Activated CD8-positive, alpha-beta T cell treated with anti-CD3 and anti-CD28 coated beads for 36 hours (primary cell): ENCODE measurements at regions of chr7 and their contacts with region 1.

Region 1: DNA sequence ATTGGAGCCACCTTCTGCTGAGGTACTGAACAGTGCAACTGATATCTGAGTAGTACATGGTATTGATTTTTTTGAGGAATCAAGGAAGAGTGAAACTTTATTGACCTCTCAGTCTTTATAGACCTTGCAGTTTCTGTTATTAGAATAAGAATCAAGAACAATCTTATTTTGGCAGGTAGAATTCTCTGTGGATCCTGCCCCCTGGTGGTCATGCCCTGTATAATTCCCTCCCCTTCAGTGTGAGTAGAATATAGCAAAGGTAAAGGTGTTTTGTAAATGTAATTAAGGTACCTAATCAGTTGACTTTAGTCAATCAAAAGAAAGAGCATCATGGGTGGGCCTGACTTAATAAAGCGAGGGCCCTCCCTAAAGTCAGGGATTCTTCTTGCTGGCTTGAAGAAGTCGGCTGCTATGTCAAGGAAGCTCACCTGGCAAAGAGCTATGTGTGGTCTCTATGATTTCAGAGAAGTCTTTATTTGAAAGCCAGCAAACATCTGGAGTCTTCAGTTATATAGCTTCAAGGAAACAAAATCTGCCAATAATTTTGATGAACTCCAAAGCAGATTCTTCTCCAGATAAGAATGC is 142.8 kb downstream of the LSM5 start:
- DNase-seq: peak; percentile 54
- ATAC-seq: no peak
- H3K4me3 Mint-ChIP-seq: no peak overlapping the region
- H3K27ac Mint-ChIP-seq: no peak overlapping the region
- H3K4me1 Mint-ChIP-seq: no peaks in the 10 kb centered on the region
- H3K27me3 Mint-ChIP-seq: no peaks in the 10 kb centered on the region
- CTCF ChIP-seq: peak; percentile 84

Region 2: GRCh38 chr7:32204361-32205018 is 142.8 kb before region 1 on chr7:
- CTCF ChIA-PET with region 1: interaction called, 27 read pairs
- POLR2A ChIA-PET with region 1: no interaction called
- intact Hi-C with region 1: no loop called
- DNase-seq: peak; percentile 21
- ATAC-seq: no peak
- H3K4me3 Mint-ChIP-seq: no peak overlapping the region
- H3K27ac Mint-ChIP-seq: no peak overlapping the region
- H3K4me1 Mint-ChIP-seq: no peaks in the 10 kb centered on the region
- H3K27me3 Mint-ChIP-seq: no peaks in the 10 kb centered on the region
- CTCF ChIP-seq: no peak

Region 3: DNA sequence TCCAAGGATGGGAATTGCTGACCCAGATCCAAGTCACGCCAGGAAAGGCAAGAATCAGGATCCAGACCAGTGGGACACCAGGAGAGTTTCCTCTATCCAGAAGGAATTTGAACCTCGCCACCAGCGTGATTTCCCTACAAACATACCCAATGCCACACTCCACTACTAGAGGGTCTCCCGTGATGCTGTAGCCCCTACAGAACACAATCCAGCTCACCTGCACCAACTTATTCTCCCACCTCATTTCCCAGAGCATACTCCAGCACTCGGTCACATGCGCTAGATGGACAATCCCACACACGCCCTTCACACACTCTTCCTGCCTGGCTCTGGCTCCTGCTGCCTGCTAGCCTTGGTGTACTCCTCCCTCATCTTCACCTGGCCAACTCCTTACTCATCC is 135.0 kb before region 1 on chr7:
- CTCF ChIA-PET with region 1: interaction called, 27 read pairs
- POLR2A ChIA-PET with region 1: no interaction called
- intact Hi-C with region 1: loop called (anchors 5 kb)
- DNase-seq: no peak
- ATAC-seq: no peak
- H3K4me3 Mint-ChIP-seq: no peak overlapping the region
- H3K27ac Mint-ChIP-seq: no peak overlapping the region
- H3K4me1 Mint-ChIP-seq: no peaks in the 10 kb centered on the region
- H3K27me3 Mint-ChIP-seq: no peaks in the 10 kb centered on the region
- CTCF ChIP-seq: no peak

Region 4: GRCh38 chr7:32357535-32358277 is 10.4 kb after region 1 on chr7:
- CTCF ChIA-PET with region 1: interaction called, 10 read pairs
- POLR2A ChIA-PET with region 1: no interaction called
- intact Hi-C with region 1: no loop called
- DNase-seq: no peak
- ATAC-seq: no peak
- H3K4me3 Mint-ChIP-seq: no peak overlapping the region
- H3K27ac Mint-ChIP-seq: no peak overlapping the region
- H3K4me1 Mint-ChIP-seq: no peaks in the 10 kb centered on the region
- H3K27me3 Mint-ChIP-seq: peaks cover 4% of the 10 kb centered on the region
- CTCF ChIP-seq: no peak

Region 5: GRCh38 chr7:32462978-32463377 is 115.6 kb after region 1 on chr7:
- CTCF ChIA-PET with region 1: no interaction called
- POLR2A ChIA-PET with region 1: no interaction called
- intact Hi-C with region 1: no loop called
- DNase-seq: no peak
- ATAC-seq: no peak
- H3K4me3 Mint-ChIP-seq: no peak overlapping the region
- H3K27ac Mint-ChIP-seq: no peak overlapping the region
- H3K4me1 Mint-ChIP-seq: no peaks in the 10 kb centered on the region
- H3K27me3 Mint-ChIP-seq: peaks cover 3% of the 10 kb centered on the region
- CTCF ChIP-seq: no peak